Activated naive CD8-positive, alpha-beta T cell treated with anti-CD3 and anti-CD28 coated beads, Interleukin-2, amount 10 ng/mL, durations not matched to agents 7 days and 5 days (primary cell): ENCODE measurements at regions of chr1 and their contacts with region 1.

Region 1: DNA sequence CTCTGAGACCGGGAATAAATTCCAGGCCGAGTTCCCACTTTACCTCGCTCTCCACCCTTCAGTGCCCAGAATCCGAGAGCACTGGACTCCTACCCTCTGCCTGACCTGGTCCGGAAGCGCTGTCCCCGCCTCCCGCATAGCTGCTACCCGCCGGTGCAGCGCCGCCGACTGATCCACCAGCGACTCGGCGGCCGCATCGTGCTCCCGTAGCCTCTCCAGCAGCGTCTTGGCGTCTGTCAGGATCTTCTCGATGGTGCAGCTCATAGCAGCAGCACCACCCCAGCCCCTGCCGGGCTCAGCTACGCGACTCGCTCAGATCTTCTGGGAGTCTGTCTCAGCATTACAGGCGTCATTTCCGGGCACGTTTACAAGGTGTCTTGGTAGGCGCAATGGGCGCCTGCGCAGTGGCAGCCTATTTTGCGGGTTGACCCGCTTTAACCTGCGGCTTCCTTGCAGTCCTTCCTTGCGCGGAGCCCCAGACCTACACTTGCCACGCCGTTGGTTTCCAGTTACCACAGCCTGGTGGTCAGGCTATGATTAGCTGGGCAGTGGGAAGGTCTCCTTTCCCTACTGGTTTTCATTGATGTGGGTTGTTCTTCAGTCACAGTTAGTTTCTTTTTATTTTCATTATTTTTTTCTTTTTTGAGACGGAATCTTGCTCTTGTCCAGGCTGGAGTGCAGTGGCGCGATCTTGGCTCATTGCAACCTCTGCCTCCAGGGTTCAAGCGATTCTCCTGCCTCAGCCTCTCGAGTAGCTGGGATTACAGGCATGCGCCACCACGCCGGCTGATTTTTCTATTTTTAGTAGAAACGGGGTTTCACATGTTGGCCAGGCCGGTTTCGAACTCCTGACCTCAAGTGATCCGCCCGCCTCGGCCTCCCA is at the start of gene SIKE1:
- DNase-seq: peak; percentile 90
- ATAC-seq: peak; percentile 99
- H3K4me3 Mint-ChIP-seq: peak within 1 kb of the TSS; percentile 100
- H3K27ac Mint-ChIP-seq: peak within 1 kb of the TSS; percentile 100
- H3K4me1 Mint-ChIP-seq: peaks cover 19% of the 10 kb centered on the region
- H3K27me3 Mint-ChIP-seq: peaks cover 17% of the 10 kb centered on the region
- total RNA-seq, gene SIKE1: 64.9 to 72.7 TPM

Region 2: DNA sequence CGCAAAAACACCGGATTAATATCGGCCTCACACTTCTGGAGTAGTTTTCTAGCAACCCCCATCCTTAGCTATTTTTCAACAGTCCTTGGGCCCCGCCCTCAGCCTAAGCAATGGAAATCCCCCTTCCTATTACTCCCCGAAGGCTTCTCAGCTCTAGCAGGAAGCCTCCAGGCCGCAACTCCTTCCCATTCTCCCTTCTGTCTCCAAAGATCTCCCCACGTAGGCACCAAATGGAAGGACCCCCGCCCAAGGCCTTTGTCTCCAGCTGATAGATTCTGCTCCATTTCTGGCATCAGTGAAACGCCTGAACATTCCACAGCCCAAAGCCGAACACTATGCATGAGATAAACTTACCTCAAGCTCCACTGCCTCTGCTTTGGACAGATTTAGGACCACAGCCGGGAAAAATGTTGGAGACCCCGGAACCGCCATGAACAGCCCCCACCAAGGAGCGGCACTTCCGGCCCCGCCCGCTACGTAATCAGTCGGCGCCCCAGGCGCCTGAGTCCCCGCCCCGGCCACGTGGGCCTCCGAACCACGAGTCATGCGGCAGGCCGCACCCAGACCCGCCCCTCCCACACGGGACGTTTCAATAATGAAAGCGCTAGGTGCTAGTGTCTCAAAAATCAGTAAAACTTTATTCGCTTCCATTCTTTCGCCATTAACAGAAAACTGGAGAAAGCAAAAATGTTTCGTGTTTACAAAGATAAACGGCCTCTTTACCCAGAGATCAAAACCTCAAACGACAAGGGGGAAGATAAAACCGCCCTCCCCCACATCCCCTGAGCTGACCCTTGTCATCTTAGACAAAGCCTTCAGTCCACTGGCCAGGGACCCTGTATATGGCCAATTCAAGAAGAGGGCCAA is 64.0 kb before region 1 on chr1 and contains the start of gene NRAS:
- POLR2A ChIA-PET with region 1: interaction called, 10 read pairs
- DNase-seq: peak; percentile 97
- ATAC-seq: peak; percentile 98
- H3K4me3 Mint-ChIP-seq: peak within 1 kb of the TSS; percentile 93
- H3K27ac Mint-ChIP-seq: peak within 1 kb of the TSS; percentile 94
- H3K4me1 Mint-ChIP-seq: peaks cover 18% of the 10 kb centered on the region
- H3K27me3 Mint-ChIP-seq: no peaks in the 10 kb centered on the region
- total RNA-seq, gene NRAS: 37.4 to 40.2 TPM

Region 3: DNA sequence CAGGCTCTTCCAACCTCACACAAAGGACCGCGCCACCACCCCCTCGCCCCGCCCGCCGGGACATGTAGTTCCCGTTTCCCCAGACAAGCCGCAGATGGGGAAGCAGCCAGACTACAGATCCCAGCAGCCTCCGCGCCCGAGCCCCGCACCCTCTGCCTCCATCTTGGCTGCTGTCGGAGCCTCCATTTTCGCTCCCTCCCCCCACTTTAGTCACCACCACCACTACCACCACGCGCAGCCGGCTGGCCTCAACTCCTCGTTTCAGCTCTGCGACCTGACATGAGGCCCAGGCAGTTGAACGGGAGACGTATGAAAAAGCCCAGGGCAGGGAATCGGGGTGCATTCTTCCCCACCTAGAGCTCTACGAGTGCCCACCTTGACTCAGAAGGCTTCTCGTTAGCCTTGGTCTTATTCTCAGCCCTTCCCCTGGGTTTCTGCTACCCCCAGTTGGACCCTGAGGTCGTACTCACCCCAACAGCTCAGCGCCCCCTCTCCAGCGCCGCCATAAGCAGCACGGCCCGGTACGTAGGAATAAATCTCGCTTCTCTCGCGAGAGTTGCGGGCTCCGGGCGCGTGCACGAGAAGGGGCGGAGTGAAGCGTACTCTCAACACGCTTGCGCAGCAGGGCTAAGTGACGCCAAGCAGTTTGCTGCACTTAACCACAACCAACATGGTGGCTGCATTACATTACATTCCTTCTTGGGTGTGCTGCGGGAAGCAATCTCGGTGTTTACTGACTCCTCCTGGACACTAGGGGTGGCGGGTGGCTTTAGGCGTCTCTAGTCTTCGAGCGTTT is 22.9 kb before region 1 on chr1 and contains the start of gene CSDE1:
- POLR2A ChIA-PET with region 1: interaction called, 12 read pairs
- DNase-seq: peak; percentile 95
- ATAC-seq: peak; percentile 87
- H3K4me3 Mint-ChIP-seq: peak within 1 kb of the TSS; percentile 96
- H3K27ac Mint-ChIP-seq: peak within 1 kb of the TSS; percentile 99
- H3K4me1 Mint-ChIP-seq: peaks cover 43% of the 10 kb centered on the region
- H3K27me3 Mint-ChIP-seq: no peaks in the 10 kb centered on the region
- total RNA-seq, gene CSDE1: 401 to 410 TPM